ENCODE measurements at regions of chr2 and their contacts with region 1.

Region 1: DNA sequence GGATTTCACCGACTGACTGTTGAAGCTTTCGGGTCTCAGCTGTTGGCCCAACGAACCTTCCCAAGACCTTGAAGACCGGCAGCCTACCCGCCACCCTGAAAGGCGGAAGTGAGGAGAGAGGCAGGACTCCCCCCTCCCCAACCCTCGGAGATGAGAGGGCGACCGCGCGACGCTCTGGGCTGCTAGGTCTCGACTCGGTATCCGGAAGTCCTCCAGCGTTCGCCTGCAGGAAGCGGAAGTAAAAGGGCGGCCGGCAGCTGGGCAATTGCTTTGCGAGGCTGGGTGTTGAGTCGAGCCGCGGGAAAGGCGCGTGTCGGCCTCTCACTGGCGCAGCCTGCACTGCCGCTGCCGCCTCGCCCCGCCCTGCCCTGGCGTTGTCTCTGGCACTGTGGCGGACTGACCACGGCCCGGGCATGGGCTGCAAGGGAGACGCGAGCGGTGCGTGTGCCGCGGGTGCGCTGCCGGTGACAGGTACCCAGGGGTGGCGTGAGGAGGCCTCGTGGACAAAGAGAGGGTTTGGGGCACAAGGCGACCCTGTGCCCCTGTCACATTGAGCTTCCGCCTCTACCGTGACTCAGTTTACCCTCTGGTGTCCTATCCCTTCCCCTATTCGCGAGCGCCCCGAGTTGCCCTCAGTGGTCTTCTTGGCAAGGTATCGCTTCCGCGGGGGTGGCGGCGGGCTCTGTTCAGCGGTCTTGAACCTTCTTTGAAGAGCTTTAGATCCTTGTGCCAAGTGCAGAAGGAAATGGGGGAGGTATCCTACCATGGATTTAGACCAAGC is at the start of gene UGGT1:
- DNase-seq: peak in 1 of 2 donors; percentile 90
- H3K4me3 ChIP-seq: peak within 1 kb of the TSS; percentile 94 to 95
- H3K27ac ChIP-seq: peak within 1 kb of the TSS; percentile 66
- H3K4me1 ChIP-seq: peaks cover 31% of the 10 kb centered on the region
- H3K27me3 ChIP-seq: no peaks in the 10 kb centered on the region
- CTCF ChIP-seq: no peak
- POLR2A ChIP-seq: peak in 1 of 2 donors; percentile 41
- total RNA-seq, gene UGGT1: 40.5 TPM

Region 2: GRCh38 chr2:127580167-127581047 is 510.7 kb before region 1 on chr2:
- intact Hi-C with region 1: no loop called
- DNase-seq: peak in 1 of 2 donors; percentile 85
- H3K4me3 ChIP-seq: no peak overlapping the region
- H3K27ac ChIP-seq: no peak overlapping the region
- H3K4me1 ChIP-seq: peaks cover 12% of the 10 kb centered on the region
- H3K27me3 ChIP-seq: no peaks in the 10 kb centered on the region
- CTCF ChIP-seq: no peak
- POLR2A ChIP-seq: no peak

Region 3: DNA sequence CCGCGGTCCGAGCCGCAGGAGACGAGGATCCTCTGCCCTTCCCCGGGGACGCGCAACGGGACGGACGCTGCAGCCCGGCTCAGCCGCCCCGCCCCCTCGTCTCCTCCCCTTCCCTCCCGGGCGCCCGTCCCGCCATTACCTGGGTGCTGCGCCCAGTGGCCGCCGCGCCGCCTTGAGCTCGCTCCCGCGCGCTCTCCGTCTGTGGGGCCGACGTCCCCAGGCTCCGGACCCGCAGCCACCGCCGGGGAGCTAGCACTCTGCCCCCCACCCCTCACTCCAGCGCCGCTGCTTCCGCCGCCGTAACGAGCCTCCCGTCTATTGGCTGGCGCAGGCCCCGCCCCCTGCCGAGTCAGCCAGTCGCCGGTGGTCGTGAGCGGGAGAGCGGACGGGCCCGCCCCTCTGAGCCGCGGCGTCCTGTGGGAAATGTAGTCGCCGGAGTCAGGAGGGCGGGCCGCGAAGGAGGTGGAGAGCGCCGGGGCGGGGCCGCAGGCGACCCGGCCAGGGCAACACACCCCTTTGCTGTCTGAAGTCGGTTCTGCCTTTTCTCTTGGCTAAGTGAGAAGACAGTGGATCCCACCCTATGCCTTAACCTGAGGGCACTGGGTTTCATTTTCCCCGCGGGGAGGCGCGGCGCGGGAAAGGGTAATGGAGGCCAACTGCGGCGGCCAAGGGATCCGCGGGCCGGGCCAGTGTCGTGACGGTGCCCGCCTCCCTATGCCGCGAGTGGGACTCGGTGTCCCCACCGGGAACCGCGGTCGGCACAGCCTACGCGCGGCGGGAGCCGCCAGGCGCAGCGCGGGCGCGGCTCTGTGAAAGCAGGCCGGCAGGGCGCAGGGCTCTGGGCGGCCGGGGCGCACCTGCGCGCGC is 63.1 kb before region 1 on chr2 and contains the start of gene SAP130:
- intact Hi-C with region 1: loop called (anchors 5 kb)
- DNase-seq: peak; percentile 97 to 98
- H3K4me3 ChIP-seq: peak within 1 kb of the TSS; percentile 59 to 98
- H3K27ac ChIP-seq: peak within 1 kb of the TSS; percentile 96
- H3K4me1 ChIP-seq: peaks cover 21% of the 10 kb centered on the region
- H3K27me3 ChIP-seq: no peaks in the 10 kb centered on the region
- CTCF ChIP-seq: no peak
- POLR2A ChIP-seq: peak in 1 of 2 donors; percentile 44
- total RNA-seq, gene SAP130: 14.2 TPM